ENCODE measurements at regions of chr14 and their contacts with region 1.

Region 1: GRCh38 chr14:50773632-50774541 is 57.1 kb downstream of the NIN start:
- DNase-seq: peak; percentile 34
- H3K4me3 ChIP-seq: no peak overlapping the region
- H3K27ac ChIP-seq: peak overlapping the region in 2 of 4 donors; percentile 4 to 64
- H3K4me1 ChIP-seq: peaks cover 0 to 7% (median 2%) of the 10 kb centered on the region in 4 donors
- H3K27me3 ChIP-seq: no peaks in the 10 kb centered on the region
- CTCF ChIP-seq: peak; percentile 43 to 70 (median 54)
- EP300 ChIP-seq: no peak
- POLR2A ChIP-seq: no peak

Region 2: GRCh38 chr14:50542941-50543418 is 230.9 kb before region 1 on chr14:
- in situ Hi-C with region 1: loop called in 2 of 4 experiments (anchors 10 kb)
- intact Hi-C with region 1: no loop called
- DNase-seq: peak; percentile 20
- H3K4me3 ChIP-seq: no peak overlapping the region
- H3K27ac ChIP-seq: no peak overlapping the region
- H3K4me1 ChIP-seq: no peaks in the 10 kb centered on the region
- H3K27me3 ChIP-seq: no peaks in the 10 kb centered on the region
- CTCF ChIP-seq: peak; percentile 35 to 58 (median 53)
- EP300 ChIP-seq: no peak
- POLR2A ChIP-seq: no peak

Region 3: GRCh38 chr14:50619556-50620141 is 154.2 kb before region 1 on chr14:
- in situ Hi-C with region 1: no loop called
- intact Hi-C with region 1: loop called (anchors 10 kb)
- DNase-seq: no peak
- H3K4me3 ChIP-seq: no peak overlapping the region
- H3K27ac ChIP-seq: no peak overlapping the region
- H3K4me1 ChIP-seq: no peaks in the 10 kb centered on the region
- H3K27me3 ChIP-seq: no peaks in the 10 kb centered on the region
- CTCF ChIP-seq: peak in 4 of 5 experiments; percentile 34 to 55 (median 50)
- EP300 ChIP-seq: no peak
- POLR2A ChIP-seq: no peak

Region 4: DNA sequence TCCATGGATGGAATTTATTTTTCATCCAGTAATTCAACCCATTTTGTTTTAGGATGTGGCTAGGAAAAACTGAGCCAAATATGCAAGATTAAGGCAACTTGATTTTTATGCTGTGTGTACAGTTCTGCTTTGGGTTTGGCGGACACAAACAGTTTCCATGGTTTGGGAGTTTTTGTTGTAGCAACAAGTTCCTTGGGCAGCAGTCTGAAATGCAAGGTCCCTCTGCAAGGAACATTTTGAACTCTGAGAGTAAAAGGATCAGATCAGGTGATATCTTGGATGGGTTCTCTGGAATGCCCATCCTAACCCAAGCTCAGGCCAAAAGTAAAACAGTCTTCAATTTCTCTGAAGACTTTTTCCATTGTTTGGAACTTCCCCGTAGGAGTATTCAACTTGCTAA is 627.4 kb after region 1 on chr14:
- in situ Hi-C with region 1: no loop called
- intact Hi-C with region 1: loop called (anchors 5 kb)
- DNase-seq: no peak
- H3K4me3 ChIP-seq: no peak overlapping the region
- H3K27ac ChIP-seq: peak overlapping the region; percentile 1 to 63 (median 37)
- H3K4me1 ChIP-seq: peaks cover 0 to 12% (median 3%) of the 10 kb centered on the region in 4 donors
- H3K27me3 ChIP-seq: no peaks in the 10 kb centered on the region
- CTCF ChIP-seq: no peak
- EP300 ChIP-seq: no peak
- POLR2A ChIP-seq: no peak